ENCODE measurements at regions of chr10 and their contacts with region 1.

Region 1: DNA sequence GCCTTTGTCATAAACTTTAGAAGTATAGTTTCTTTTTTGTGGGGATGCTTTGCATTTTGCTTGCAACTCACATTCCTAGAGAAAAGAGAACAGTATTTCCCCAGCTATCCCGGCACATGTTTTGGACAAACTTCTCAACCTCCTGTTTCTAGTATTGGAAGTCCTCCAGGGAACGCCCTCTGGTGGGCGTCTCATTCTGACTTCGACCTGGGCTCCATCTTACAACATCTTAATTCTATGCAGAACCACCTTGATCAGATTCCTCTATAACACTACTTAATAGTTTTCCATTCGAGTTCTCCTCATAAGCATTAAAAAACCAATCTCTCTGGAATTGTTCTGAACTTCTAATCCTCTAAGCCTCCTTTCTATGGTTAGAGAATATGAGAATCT is 139.5 kb upstream of the FZD8 start:
- DNase-seq: peak; percentile 72
- ATAC-seq: no peak
- H3K4me3 ChIP-seq: no peak overlapping the region
- H3K27ac ChIP-seq: peak overlapping the region; percentile 72; the same call in 1 of the 2 replicates
- H3K4me1 ChIP-seq: peaks cover 37% of the 10 kb centered on the region
- H3K27me3 ChIP-seq: no peaks in the 10 kb centered on the region
- CTCF ChIP-seq: peak; percentile 72

Region 2: GRCh38 chr10:35642027-35642792 is 139.4 kb before region 1 on chr10 and contains the start of gene FZD8:
- CTCF ChIA-PET with region 1: no interaction called
- POLR2A ChIA-PET with region 1: interaction called, 3 read pairs
- intact Hi-C with region 1: loop called (anchors 1 kb)
- DNase-seq: peak; percentile 100
- ATAC-seq: peak; percentile 73
- H3K4me3 ChIP-seq: peak within 1 kb of the TSS; percentile 80
- H3K27ac ChIP-seq: peak within 1 kb of the TSS; percentile 62
- H3K4me1 ChIP-seq: peaks cover 30% of the 10 kb centered on the region
- H3K27me3 ChIP-seq: no peaks in the 10 kb centered on the region
- CTCF ChIP-seq: peak; percentile 60; the same call in 1 of the 2 replicates
- total RNA-seq, gene FZD8: 275 and 375 TPM in 2 replicates

Region 3: DNA sequence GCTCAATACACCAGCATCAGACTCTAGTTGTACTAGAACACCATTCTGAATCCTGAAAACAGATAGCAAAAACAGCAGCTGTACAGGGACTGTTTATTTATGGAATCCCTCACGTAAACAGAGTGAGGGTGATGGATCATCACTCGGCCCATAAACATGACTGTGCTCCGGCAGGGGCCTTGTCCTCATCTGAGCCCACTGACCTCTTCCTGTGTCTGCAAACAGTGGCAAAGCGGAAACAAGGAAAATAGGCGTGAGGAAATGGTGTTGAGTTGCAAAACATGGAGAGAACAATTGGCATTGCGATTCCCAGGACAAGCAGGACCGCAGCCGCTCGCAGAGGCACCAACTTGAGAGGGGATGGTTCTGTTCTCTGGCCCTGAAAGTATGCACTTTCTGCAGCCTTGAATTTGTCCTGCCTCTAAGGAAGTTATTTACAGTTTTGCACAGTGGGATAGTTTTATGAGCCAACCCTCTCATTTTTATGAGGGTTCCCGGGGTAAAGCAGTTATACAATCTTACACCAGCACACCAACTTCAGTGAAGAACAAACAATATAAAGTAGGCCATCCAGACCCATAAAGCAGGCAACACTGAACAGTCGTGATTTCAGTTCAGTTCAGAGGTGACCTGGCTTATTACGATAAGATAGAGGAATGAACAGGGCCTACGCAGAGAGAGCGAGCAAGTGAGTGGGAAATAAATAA is 108.5 kb after region 1 on chr10:
- CTCF ChIA-PET with region 1: no interaction called
- POLR2A ChIA-PET with region 1: no interaction called
- intact Hi-C with region 1: loop called (anchors 1 kb)
- DNase-seq: peak; percentile 74
- ATAC-seq: peak; percentile 90
- H3K4me3 ChIP-seq: no peak overlapping the region
- H3K27ac ChIP-seq: peak overlapping the region; percentile 38
- H3K4me1 ChIP-seq: peaks cover 25% of the 10 kb centered on the region
- H3K27me3 ChIP-seq: no peaks in the 10 kb centered on the region
- CTCF ChIP-seq: no peak

Region 4: GRCh38 chr10:36023939-36024338 is 242.3 kb after region 1 on chr10:
- CTCF ChIA-PET with region 1: no interaction called
- POLR2A ChIA-PET with region 1: no interaction called
- intact Hi-C with region 1: loop called (anchors 1 kb)
- DNase-seq: peak; percentile 100
- ATAC-seq: peak; percentile 98
- H3K4me3 ChIP-seq: no peak overlapping the region
- H3K27ac ChIP-seq: peak overlapping the region; percentile 69
- H3K4me1 ChIP-seq: peaks cover 15% of the 10 kb centered on the region
- H3K27me3 ChIP-seq: no peaks in the 10 kb centered on the region
- CTCF ChIP-seq: no peak

Region 5: GRCh38 chr10:36393801-36394200 is 612.2 kb after region 1 on chr10:
- CTCF ChIA-PET with region 1: no interaction called
- POLR2A ChIA-PET with region 1: no interaction called
- intact Hi-C with region 1: loop called (anchors 1 kb)
- DNase-seq: peak; percentile 99
- ATAC-seq: peak; percentile 88
- H3K4me3 ChIP-seq: no peak overlapping the region
- H3K27ac ChIP-seq: peak overlapping the region; percentile 21
- H3K4me1 ChIP-seq: peaks cover 13% of the 10 kb centered on the region
- H3K27me3 ChIP-seq: no peaks in the 10 kb centered on the region
- CTCF ChIP-seq: no peak

Region 6: DNA sequence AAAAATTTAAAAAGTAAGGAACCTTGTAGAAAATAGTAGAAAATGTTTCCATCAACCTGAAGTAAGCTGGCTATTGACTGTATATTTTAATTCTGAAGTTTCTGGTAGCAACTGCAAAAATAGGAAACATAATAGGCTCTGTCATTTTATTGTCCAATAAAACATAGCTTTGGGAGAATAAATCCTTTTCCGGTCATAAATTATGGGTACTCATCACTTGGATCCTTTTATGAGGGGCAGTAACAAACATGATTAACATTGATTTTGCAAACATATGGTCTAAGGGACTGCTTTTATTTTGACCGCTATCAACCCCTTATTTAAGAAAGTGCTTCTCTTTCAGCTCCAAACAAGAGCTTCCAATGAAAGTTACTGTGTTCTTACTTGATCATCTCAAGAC is 847.8 kb after region 1 on chr10:
- CTCF ChIA-PET with region 1: no interaction called
- POLR2A ChIA-PET with region 1: no interaction called
- intact Hi-C with region 1: loop called (anchors 1 kb)
- DNase-seq: peak; percentile 76
- ATAC-seq: peak; percentile 71
- H3K4me3 ChIP-seq: no peak overlapping the region
- H3K27ac ChIP-seq: peak overlapping the region; percentile 81
- H3K4me1 ChIP-seq: peaks cover 24% of the 10 kb centered on the region
- H3K27me3 ChIP-seq: no peaks in the 10 kb centered on the region
- CTCF ChIP-seq: no peak

Region 7: DNA sequence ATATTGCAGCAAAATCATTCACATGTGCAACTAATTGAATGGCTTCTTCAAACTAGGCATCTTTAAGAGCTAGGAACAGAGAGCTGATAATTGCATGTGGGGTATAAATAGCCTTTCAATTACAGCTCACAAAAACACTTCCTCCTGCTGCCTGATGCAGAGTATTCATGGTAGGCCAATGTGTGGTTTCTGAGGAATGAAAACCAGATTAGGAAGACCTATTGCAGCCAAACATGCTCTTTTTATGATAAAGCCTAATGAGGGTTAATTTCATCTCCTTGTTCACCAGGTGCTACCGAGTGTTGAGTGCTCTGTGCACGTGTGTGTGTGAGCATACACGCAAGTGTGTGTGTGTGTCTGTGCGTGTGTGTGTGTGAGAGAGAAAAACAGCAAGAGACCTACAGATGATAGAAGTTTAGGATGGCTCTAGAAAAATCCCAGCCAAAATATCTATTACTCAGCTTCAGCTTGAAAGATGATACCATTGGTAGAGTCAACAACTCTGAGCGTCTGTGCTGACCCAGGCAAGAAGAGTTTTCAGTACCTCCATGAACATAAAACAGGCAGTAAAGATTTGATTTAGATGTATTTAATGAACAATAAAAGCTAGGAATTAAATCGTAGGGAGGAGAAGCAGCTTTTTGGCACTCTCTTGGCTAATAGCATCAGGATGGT is 895.3 kb after region 1 on chr10:
- CTCF ChIA-PET with region 1: no interaction called
- POLR2A ChIA-PET with region 1: no interaction called
- intact Hi-C with region 1: loop called (anchors 5 kb)
- DNase-seq: peak; percentile 90
- ATAC-seq: peak; percentile 72
- H3K4me3 ChIP-seq: no peak overlapping the region
- H3K27ac ChIP-seq: peak overlapping the region; percentile 47
- H3K4me1 ChIP-seq: peaks cover 47% of the 10 kb centered on the region
- H3K27me3 ChIP-seq: no peaks in the 10 kb centered on the region
- CTCF ChIP-seq: no peak

Measured in PC-3 (cell line).